Activated CD4-positive, alpha-beta memory T cell treated with anti-CD3 and anti-CD28 coated beads for 36 hours (primary cell): ENCODE measurements at regions of chr9 and their contacts with region 1.

Region 1: GRCh38 chr9:91361291-91362050 is at the start of gene AUH:
- DNase-seq: peak; percentile 91
- H3K4me3 Mint-ChIP-seq: peak within 1 kb of the TSS; percentile 96
- H3K27ac Mint-ChIP-seq: peak within 1 kb of the TSS; percentile 95
- H3K4me1 Mint-ChIP-seq: peaks cover 50% of the 10 kb centered on the region
- H3K27me3 Mint-ChIP-seq: no peaks in the 10 kb centered on the region
- total RNA-seq, gene AUH: 38.8 to 40.9 TPM

Region 2: DNA sequence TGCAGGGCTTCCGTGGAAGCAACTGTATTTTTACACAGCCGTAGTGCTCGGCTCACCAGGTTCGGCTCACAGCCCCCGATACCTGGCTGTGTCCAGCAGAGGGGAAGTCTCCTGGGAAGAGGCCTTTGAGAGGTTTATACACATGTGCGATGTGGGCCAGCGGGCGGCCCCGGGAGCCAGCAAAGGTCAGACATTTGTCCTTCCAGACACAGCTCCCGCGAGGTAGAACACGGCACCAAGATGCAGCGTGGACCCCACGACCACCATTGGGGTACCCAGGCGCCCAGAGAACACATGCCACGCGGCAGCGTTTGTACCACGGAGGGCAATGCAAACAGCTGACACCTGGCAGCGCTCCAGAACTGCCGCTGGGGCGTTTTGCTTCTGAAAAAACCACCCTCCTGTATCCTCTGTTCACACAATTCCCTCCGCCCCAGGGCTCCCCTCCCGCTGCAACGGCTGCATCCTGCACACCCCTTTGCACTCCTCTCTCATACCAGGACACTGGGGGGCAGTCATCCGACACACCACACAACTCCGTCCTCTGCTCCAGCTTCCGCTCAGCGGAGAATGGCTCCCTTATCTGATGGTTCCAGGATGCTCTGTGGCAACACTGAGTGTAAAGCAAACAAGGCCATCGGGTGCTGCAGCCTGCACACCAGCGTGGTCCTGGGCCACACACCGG is 324.5 kb before region 1 on chr9:
- CTCF ChIA-PET with region 1: interaction called, 13 read pairs
- POLR2A ChIA-PET with region 1: interaction called, 3 read pairs
- intact Hi-C with region 1: no loop called
- DNase-seq: peak; percentile 86
- H3K4me3 Mint-ChIP-seq: peak overlapping the region; percentile 7
- H3K27ac Mint-ChIP-seq: peak overlapping the region; percentile 42
- H3K4me1 Mint-ChIP-seq: peaks cover 48% of the 10 kb centered on the region
- H3K27me3 Mint-ChIP-seq: peaks cover 22% of the 10 kb centered on the region

Region 3: DNA sequence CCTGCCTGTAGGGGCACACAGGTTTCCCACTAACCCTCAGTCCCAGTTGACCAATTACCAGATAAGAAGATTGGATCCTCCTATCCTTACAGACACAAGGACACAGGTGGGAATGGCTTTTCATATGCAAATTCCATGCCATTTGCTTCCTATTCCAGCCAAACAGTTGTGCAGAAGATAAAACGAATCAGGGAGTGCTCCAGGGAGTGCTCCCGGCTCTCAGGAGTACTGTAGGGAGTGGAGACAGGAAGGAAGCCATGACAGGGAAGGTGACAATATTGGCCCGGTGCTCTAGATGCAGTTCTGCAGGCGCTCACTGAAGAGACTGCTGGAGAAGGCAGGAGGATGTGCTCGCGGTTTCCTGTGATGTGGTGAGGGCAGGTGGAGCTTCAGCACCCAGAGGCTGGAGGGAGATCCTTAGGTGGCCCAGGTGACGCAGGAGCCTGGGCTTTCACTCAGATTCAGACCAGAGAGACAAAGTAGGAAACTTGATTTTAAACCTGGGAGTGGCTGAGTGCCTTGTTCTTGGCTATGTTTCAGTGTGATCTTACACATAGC is 259.8 kb before region 1 on chr9:
- CTCF ChIA-PET with region 1: no interaction called
- POLR2A ChIA-PET with region 1: interaction called, 5 read pairs
- intact Hi-C with region 1: loop called (anchors 1 kb)
- DNase-seq: peak; percentile 95
- H3K4me3 Mint-ChIP-seq: peak overlapping the region; percentile 73
- H3K27ac Mint-ChIP-seq: peak overlapping the region; percentile 93
- H3K4me1 Mint-ChIP-seq: peaks cover 56% of the 10 kb centered on the region
- H3K27me3 Mint-ChIP-seq: peaks cover 5% of the 10 kb centered on the region

Region 4: DNA sequence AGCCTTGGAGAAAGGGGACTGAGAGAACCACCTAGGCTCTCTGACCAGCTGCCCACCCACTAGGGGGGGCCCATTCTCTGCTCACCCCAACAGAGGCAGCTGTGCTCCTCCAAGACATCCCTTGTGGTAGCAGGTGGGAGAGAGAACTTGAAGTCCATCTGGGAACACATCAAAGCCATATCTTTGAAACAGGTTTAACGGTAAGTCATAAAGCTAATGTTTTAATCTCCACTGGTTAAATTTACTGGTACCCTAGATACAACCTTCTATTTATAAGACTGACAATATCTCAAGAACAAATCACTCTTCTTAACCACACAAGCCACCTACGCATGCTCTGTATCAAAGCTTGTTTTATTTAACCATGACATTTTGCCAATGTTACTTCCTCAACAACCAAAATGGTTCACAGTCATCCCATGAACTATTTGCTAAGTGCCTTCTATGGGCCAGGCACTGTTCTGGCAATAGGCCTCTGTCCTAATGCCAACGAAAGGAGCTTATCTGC is 20.2 kb before region 1 on chr9:
- CTCF ChIA-PET with region 1: no interaction called
- POLR2A ChIA-PET with region 1: interaction called, 8 read pairs
- intact Hi-C with region 1: loop called (anchors 2 kb)
- DNase-seq: no peak
- H3K4me3 Mint-ChIP-seq: no peak overlapping the region
- H3K27ac Mint-ChIP-seq: peak overlapping the region; percentile 12
- H3K4me1 Mint-ChIP-seq: peaks cover 36% of the 10 kb centered on the region
- H3K27me3 Mint-ChIP-seq: no peaks in the 10 kb centered on the region

Region 5: GRCh38 chr9:91395553-91396471 is 34.3 kb after region 1 on chr9:
- CTCF ChIA-PET with region 1: interaction called, 3 read pairs
- POLR2A ChIA-PET with region 1: interaction called, 3 read pairs
- intact Hi-C with region 1: loop called (anchors 1 kb)
- DNase-seq: peak; percentile 44
- H3K4me3 Mint-ChIP-seq: peak overlapping the region; percentile 19
- H3K27ac Mint-ChIP-seq: peak overlapping the region; percentile 78
- H3K4me1 Mint-ChIP-seq: peaks cover 19% of the 10 kb centered on the region
- H3K27me3 Mint-ChIP-seq: peaks cover 15% of the 10 kb centered on the region